SK-N-SH (cell line): ENCODE measurements at regions of chr5 and their contacts with region 1.

Region 1: DNA sequence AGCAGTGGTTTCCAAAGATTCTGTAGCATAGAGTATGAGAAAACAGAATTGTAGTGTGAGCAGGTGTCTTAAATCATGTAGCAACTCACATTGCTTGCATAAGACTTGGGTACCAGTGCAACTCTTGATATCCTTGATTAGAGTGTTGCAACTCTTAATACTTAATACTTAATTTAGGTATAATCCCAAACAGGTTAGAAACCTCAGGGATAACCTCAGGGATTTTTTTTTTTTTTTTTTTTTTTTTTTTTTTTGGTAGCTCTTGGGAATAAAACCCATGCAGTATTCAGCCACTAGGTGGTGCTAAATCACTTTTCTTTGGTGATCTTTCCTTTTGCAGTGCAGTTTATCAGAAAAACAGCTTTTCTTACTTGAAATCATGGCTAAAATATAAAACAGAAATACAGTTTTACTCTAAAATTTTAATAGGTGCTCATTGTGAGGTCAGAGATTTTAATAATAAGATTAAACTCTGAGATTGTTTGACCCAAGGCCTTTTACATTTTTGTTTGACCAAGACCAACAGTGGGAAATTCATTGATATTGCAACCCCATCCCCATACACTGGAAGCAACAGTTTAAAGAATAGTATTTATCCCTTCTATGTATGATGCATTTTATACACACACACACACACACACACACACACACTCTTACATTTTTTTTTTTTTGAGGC is 55.3 kb downstream of the ERAP1 start:
- DNase-seq: peak; percentile 19
- H3K4me3 ChIP-seq: no peak overlapping the region
- H3K27ac ChIP-seq: no peak overlapping the region
- H3K4me1 ChIP-seq: peaks cover 0 to 10% of the 10 kb centered on the region in 2 experiments; a peak in 2 of 4 replicates
- H3K27me3 ChIP-seq: no peaks in the 10 kb centered on the region
- CTCF ChIP-seq: peak; percentile 68
- EP300 ChIP-seq: no peak
- RAD21 ChIP-seq: peak; percentile 79

Region 2: DNA sequence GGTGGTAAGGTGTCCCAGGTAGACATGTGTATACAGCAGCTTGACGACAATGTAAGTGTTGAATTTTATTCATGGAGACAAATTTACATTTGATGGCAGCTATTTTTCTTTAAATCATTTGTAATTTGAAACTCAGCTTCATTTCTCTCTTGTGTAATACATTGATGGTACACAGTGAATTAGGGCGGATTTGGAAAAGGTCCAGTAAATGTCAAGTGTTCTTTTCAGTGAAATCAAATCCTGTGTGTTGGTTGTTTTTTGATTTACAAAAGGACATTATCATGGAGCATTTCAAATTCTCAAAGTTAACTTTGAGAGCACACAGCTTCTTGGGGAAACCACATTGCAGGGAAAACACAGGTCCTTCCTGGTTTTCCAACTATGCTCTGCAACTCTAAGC is 289.4 kb before region 1 on chr5:
- CTCF ChIA-PET with region 1: no interaction called
- POLR2A ChIA-PET with region 1: no interaction called
- DNase-seq: no peak
- H3K4me3 ChIP-seq: no peak overlapping the region
- H3K27ac ChIP-seq: no peak overlapping the region
- H3K4me1 ChIP-seq: no peaks in the 10 kb centered on the region
- H3K27me3 ChIP-seq: no peaks in the 10 kb centered on the region
- CTCF ChIP-seq: no peak
- EP300 ChIP-seq: no peak
- RAD21 ChIP-seq: no peak

Region 3: DNA sequence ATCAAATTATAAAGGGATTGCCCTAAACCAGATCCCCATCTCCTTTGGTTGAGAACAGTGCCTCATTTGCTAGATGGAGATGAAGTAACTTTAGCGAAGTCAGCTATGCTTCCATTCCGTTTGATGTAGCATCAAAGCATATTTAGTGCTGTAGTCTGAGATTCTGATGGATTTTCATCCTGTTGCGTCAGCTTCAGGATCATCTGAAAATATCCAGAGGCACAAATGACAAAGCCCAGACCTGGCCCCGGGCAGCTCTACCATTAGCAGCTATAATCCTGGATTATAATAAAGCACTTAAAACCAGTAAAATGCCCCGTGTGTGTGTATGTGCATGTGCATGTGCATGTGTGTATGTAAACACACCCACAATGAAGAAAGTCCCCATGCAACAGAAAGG is 10.5 kb after region 1 on chr5:
- CTCF ChIA-PET with region 1: interaction called, 17 read pairs
- POLR2A ChIA-PET with region 1: interaction called, 3 read pairs
- DNase-seq: peak; percentile 27
- H3K4me3 ChIP-seq: no peak overlapping the region
- H3K27ac ChIP-seq: peak overlapping the region; percentile 10 to 19; a peak in 1 of 4 replicates
- H3K4me1 ChIP-seq: peaks cover 3 to 11% of the 10 kb centered on the region in 2 experiments; a peak in 3 of 4 replicates
- H3K27me3 ChIP-seq: no peaks in the 10 kb centered on the region
- CTCF ChIP-seq: no peak
- EP300 ChIP-seq: peak in 1 of 2 experiments; percentile 81; a peak in 2 of 4 replicates
- RAD21 ChIP-seq: no peak

Region 4: DNA sequence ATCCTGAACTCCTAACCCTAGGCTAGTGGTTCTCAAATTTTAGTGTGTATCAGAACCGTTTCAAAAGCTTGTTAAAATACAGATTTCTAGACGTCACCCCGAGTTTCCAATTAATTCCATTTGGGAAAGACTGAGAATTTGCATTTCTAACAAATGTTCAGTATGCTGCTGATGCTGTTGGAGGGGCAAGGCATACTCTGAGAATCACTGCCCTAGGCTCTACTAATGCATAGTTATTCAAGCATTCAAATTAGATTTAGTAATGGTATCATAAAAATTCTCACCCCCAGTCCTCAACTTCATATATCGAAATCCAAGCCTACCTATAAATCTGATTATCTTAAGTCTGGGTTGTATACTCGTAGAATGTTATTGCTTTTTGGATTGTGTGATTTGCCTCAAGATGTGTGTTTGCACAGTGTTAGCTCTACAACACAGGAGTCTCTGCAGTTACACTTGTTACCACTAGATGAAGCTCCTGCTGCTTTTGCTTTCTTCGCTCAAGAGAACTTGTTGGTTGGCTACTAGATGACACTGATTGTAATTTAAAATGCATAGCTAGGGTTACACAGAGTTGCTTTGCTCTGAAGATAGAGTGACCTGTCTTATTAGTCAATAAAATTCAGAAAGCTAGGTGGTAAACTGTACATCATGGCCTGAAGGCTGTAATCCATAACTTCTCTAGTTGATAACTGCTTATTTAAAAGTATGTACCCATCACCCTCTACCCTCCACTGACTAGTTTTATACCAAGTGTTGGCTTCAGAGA is 116.3 kb after region 1 on chr5:
- CTCF ChIA-PET with region 1: interaction called, 14 read pairs
- POLR2A ChIA-PET with region 1: no interaction called
- DNase-seq: peak; percentile 32
- H3K4me3 ChIP-seq: no peak overlapping the region; a peak in 1 of 4 replicates
- H3K27ac ChIP-seq: no peak overlapping the region
- H3K4me1 ChIP-seq: no peaks in the 10 kb centered on the region
- H3K27me3 ChIP-seq: no peaks in the 10 kb centered on the region
- CTCF ChIP-seq: peak; percentile 91
- EP300 ChIP-seq: no peak
- RAD21 ChIP-seq: peak; percentile 88

Region 5: DNA sequence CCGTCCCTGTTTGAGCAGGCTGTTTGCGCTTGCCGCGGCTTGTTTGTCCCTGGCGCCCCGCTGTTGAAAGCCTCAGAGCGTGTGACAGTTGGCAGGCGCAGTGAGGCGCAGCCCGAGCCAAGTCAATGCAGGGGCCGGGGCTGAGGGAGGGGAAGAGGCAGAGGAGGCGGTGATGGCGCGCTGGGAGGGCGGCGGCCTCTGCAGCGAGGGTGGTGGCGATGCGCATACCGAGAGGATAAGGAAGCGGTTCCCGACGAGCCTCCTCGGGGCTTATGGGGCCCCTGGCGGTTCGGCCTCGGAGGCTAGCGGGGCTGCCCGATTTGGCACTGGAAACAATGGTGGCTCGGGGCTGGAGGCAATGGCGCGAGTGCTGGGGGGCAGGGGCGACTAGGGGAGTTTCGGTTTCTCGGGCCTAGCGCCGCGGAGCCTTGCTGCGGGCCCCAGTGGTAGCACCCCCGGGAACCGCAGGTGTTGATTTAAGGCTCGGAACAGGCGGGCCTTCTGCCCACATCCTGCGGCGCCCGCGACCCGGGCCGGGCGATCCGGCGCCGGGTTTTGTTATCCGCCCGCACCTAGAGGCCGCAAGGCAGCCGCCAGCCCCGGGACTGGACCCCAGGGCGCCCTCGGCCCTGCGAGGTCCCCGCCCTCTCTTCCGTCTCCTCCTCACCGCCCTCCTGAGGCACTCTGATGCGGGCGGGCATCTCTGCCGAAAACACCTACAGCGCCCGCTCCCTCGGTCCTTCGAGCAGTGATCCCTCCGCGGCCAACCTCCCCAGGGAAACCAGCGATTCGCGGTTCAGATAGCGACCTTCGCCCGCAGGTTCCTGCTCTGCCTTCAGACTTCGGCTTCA is 182.5 kb after region 1 on chr5:
- CTCF ChIA-PET with region 1: interaction called, 10 read pairs
- POLR2A ChIA-PET with region 1: interaction called, 3 read pairs
- DNase-seq: peak; percentile 89
- H3K4me3 ChIP-seq: peak overlapping the region; percentile 91 to 95
- H3K27ac ChIP-seq: peak overlapping the region; percentile 95 to 97
- H3K4me1 ChIP-seq: peaks cover 13 to 24% of the 10 kb centered on the region in 2 experiments; a peak in 3 of 4 replicates
- H3K27me3 ChIP-seq: no peaks in the 10 kb centered on the region
- CTCF ChIP-seq: no peak
- EP300 ChIP-seq: peak in 1 of 2 experiments; percentile 32; a peak in 1 of 4 replicates
- RAD21 ChIP-seq: no peak

Region 6: GRCh38 chr5:97085459-97086181 is 333.1 kb after region 1 on chr5:
- CTCF ChIA-PET with region 1: no interaction called
- POLR2A ChIA-PET with region 1: no interaction called
- DNase-seq: no peak
- H3K4me3 ChIP-seq: no peak overlapping the region
- H3K27ac ChIP-seq: no peak overlapping the region
- H3K4me1 ChIP-seq: no peaks in the 10 kb centered on the region
- H3K27me3 ChIP-seq: no peaks in the 10 kb centered on the region
- CTCF ChIP-seq: no peak
- EP300 ChIP-seq: no peak
- RAD21 ChIP-seq: no peak

Region 7: GRCh38 chr5:97131139-97131710 is 378.7 kb after region 1 on chr5:
- CTCF ChIA-PET with region 1: interaction called, 10 read pairs
- POLR2A ChIA-PET with region 1: no interaction called
- DNase-seq: no peak
- H3K4me3 ChIP-seq: no peak overlapping the region
- H3K27ac ChIP-seq: no peak overlapping the region
- H3K4me1 ChIP-seq: no peaks in the 10 kb centered on the region; a peak in 1 of 4 replicates
- H3K27me3 ChIP-seq: no peaks in the 10 kb centered on the region
- CTCF ChIP-seq: no peak
- EP300 ChIP-seq: no peak
- RAD21 ChIP-seq: no peak

Region 8: DNA sequence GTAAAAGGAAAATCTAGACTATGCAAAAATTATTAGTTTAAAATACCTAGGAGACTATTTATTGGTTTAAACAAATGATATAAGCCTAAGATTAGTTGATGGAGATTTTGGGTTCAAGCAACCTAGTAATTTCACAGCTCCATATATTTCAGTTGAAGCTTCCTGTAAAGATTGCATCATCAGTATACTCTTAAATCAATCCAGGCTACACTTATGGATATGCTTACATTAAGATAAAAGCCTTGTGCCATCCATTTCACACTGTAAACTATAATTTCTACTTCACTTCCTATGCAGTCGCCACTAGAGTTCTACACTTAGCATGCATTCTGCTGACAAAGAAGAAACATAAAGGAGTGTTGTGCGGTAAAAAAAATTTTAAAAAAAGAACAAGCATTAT is 397.2 kb after region 1 on chr5:
- CTCF ChIA-PET with region 1: interaction called, 25 read pairs
- POLR2A ChIA-PET with region 1: no interaction called
- DNase-seq: no peak
- H3K4me3 ChIP-seq: no peak overlapping the region
- H3K27ac ChIP-seq: no peak overlapping the region
- H3K4me1 ChIP-seq: no peaks in the 10 kb centered on the region
- H3K27me3 ChIP-seq: no peaks in the 10 kb centered on the region
- CTCF ChIP-seq: no peak
- EP300 ChIP-seq: no peak
- RAD21 ChIP-seq: no peak